GM18951 (cell line): ENCODE measurements at regions of chr21 and their contacts with region 1.

Region 1: GRCh38 chr21:34614633-34615486 is at the start of gene RCAN1:
- POLR2A ChIP-seq: peak; percentile 44

Region 2: GRCh38 chr21:33915368-33916199 is 699.3 kb before region 1 on chr21 and contains the start of gene ATP5PO:
- in situ Hi-C with region 1: loop called (anchors 25 kb)
- POLR2A ChIP-seq: peak; percentile 96

Region 3: DNA sequence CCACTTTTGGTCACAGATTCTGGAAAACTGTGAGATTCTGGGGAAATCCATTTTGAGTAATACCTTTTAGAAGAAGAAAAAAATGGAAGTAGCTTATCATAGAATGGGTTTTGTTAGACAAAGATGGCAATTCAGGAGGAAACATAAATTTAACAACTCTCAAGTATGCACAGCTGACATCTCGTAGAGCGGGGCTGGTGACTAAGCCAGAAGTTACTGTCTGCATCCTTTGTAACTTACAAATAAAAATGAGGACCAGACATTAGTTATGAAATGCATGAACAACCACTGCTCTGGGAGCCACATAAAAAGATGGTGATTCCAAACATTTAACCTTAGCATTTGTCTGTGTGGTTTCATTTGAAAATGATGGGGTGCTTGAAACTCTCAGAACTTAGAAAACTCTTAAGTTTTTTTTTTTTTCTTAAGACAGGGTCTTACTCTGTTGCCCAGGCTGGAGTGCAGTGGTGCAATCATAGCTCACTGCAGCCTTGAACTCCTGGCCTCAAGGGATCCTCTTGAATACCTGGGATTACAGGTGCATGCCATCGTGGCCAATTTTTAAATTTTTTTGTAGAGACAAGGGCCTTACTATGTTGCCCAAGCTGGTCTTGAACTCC is 650.0 kb before region 1 on chr21:
- in situ Hi-C with region 1: no loop called
- POLR2A ChIP-seq: no peak